CD4-positive, alpha-beta T cell (primary cell): ENCODE measurements at regions of chr2 and their contacts with region 1.

Region 1: GRCh38 chr2:174465327-174465726 is 21.5 kb downstream of the GPR155 start:
- DNase-seq: no peak
- ATAC-seq: no peak
- H3K4me3 ChIP-seq: no peak overlapping the region
- H3K4me3 Mint-ChIP-seq: no peak overlapping the region
- H3K27ac ChIP-seq: no peak overlapping the region
- H3K27ac Mint-ChIP-seq: no peak overlapping the region
- H3K4me1 ChIP-seq: no peaks in the 10 kb centered on the region
- H3K4me1 Mint-ChIP-seq: no peaks in the 10 kb centered on the region
- H3K27me3 ChIP-seq: no peaks in the 10 kb centered on the region
- H3K27me3 Mint-ChIP-seq: no peaks in the 10 kb centered on the region
- CTCF ChIP-seq: no peak

Region 2: DNA sequence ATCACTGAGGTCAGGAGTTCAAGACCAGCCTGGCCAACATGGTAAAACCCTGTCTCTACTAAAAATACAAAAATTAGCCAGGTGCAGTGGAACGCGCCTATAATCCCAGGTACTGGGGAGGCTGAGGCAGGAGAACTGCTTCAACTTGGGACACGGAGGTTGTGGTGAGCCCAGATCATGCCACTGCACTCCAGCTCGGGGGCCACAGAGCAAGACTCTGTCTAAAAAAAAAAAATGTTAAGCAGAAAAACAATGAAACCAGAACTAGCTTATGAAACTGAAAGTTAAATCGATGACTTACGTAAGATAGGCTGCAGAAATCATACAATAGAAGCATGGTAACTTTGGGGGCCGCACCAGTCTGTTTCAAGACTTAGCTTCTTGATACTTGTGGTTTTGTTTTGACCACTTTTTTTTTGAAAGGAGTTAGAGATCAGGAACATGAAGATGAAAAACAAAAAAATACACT is 27.7 kb after region 1 on chr2:
- CTCF ChIA-PET with region 1: interaction called, 7 read pairs
- POLR2A ChIA-PET with region 1: interaction called, 11 read pairs
- intact Hi-C with region 1: no loop called
- DNase-seq: peak; percentile 28 to 89 (median 56)
- ATAC-seq: peak; percentile 83
- H3K4me3 ChIP-seq: peak overlapping the region; percentile 53
- H3K4me3 Mint-ChIP-seq: peak overlapping the region; percentile 90
- H3K27ac ChIP-seq: peak overlapping the region; percentile 85
- H3K27ac Mint-ChIP-seq: peak overlapping the region; percentile 95
- H3K4me1 ChIP-seq: peaks cover 54% of the 10 kb centered on the region
- H3K4me1 Mint-ChIP-seq: peaks cover 85% of the 10 kb centered on the region
- H3K27me3 ChIP-seq: no peaks in the 10 kb centered on the region
- H3K27me3 Mint-ChIP-seq: no peaks in the 10 kb centered on the region
- CTCF ChIP-seq: no peak

Region 3: GRCh38 chr2:174546581-174547506 is 81.5 kb after region 1 on chr2:
- CTCF ChIA-PET with region 1: interaction called, 36 read pairs
- POLR2A ChIA-PET with region 1: interaction called, 3 read pairs
- intact Hi-C with region 1: loop called in 1 of 2 experiments (anchors 1 kb)
- DNase-seq: peak in 8 of 14 experiments; percentile 13 to 60 (median 24)
- ATAC-seq: peak; percentile 75
- H3K4me3 ChIP-seq: no peak overlapping the region
- H3K4me3 Mint-ChIP-seq: no peak overlapping the region
- H3K27ac ChIP-seq: no peak overlapping the region
- H3K27ac Mint-ChIP-seq: peak overlapping the region; percentile 69
- H3K4me1 ChIP-seq: peaks cover 2% of the 10 kb centered on the region
- H3K4me1 Mint-ChIP-seq: peaks cover 11% of the 10 kb centered on the region
- H3K27me3 ChIP-seq: no peaks in the 10 kb centered on the region
- H3K27me3 Mint-ChIP-seq: no peaks in the 10 kb centered on the region
- CTCF ChIP-seq: no peak

Region 4: DNA sequence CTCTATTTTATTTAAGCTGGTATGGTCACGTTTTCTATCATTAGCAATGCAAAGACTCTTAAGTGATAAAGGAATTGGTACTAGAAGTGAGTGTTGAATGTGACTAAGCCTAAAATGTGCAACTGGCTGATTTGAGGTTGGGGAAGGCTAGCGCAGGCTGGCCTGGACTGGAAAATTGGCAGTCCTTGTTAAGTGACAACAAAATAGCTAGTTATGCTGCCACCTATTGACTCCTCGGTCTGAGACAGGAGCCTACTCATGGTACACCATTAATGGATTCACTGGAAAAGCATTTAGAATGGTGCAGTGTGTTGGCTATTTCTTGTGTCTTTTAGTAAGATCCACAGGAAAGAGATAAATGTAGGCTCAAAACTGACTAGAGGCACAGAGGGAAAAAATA is 138.0 kb after region 1 on chr2:
- CTCF ChIA-PET with region 1: interaction called, 6 read pairs
- POLR2A ChIA-PET with region 1: interaction called, 8 read pairs
- intact Hi-C with region 1: loop called (anchors 2 to 10 kb)
- DNase-seq: peak in 12 of 14 experiments; percentile 19 to 85 (median 50)
- ATAC-seq: peak; percentile 66
- H3K4me3 ChIP-seq: no peak overlapping the region
- H3K4me3 Mint-ChIP-seq: peak overlapping the region; percentile 28
- H3K27ac ChIP-seq: no peak overlapping the region
- H3K27ac Mint-ChIP-seq: peak overlapping the region; percentile 95
- H3K4me1 ChIP-seq: peaks cover 69% of the 10 kb centered on the region
- H3K4me1 Mint-ChIP-seq: peaks cover 85% of the 10 kb centered on the region
- H3K27me3 ChIP-seq: no peaks in the 10 kb centered on the region
- H3K27me3 Mint-ChIP-seq: no peaks in the 10 kb centered on the region
- CTCF ChIP-seq: peak; percentile 84

Region 5: DNA sequence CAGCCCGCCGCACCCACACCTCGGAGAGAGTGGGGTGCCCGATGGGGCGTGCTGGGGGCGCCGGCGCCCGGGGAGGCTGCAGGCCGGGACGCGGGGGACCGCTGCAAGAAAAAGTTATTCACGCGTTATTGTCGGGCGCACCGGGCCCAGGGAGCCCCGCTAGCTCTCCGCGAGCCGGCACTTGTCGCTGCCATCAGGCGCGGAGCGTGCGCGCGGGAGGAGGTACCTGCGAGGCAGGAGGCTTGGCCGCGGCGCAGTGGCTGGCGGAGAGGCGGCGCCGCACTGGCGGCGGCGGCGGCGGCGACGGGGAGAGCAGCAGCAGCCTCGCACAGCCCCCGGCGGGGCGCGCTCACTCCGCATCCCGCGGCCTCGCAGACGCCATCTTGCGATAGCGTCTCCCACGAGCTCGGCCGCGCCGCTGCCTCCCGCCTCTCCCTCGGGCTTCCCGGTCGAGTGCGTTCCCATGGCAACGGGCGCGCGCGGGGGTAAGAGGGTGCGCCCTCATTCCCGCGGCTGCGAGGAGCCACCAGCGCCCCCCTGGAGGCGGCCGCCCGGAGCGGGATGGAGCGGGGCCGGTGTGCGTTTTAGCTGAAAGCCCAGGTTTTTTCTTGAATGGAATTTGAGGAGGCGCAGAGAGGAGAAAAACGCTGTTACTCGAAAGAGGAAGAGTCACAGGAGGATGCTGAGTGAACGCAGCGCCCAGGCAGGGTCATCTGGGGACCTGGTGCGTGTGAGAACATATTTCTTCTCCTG is 539.8 kb after region 1 on chr2 and contains the start of gene CHN1:
- CTCF ChIA-PET with region 1: no interaction called
- POLR2A ChIA-PET with region 1: no interaction called
- intact Hi-C with region 1: loop called in 1 of 2 experiments (anchors 10 kb)
- DNase-seq: peak; percentile 44 to 87 (median 62)
- ATAC-seq: peak; percentile 96
- H3K4me3 ChIP-seq: peak within 1 kb of the TSS; percentile 54
- H3K4me3 Mint-ChIP-seq: peak within 1 kb of the TSS; percentile 91
- H3K27ac ChIP-seq: no peak within 1 kb of the TSS
- H3K27ac Mint-ChIP-seq: no peak within 1 kb of the TSS
- H3K4me1 ChIP-seq: peaks cover 11% of the 10 kb centered on the region
- H3K4me1 Mint-ChIP-seq: peaks cover 12% of the 10 kb centered on the region
- H3K27me3 ChIP-seq: peaks cover 12 to 45% of the 10 kb centered on the region in 2 experiments
- H3K27me3 Mint-ChIP-seq: peaks cover 70% of the 10 kb centered on the region
- CTCF ChIP-seq: no peak
- total RNA-seq, gene CHN1: 5.3 to 5.6 TPM

Region 6: DNA sequence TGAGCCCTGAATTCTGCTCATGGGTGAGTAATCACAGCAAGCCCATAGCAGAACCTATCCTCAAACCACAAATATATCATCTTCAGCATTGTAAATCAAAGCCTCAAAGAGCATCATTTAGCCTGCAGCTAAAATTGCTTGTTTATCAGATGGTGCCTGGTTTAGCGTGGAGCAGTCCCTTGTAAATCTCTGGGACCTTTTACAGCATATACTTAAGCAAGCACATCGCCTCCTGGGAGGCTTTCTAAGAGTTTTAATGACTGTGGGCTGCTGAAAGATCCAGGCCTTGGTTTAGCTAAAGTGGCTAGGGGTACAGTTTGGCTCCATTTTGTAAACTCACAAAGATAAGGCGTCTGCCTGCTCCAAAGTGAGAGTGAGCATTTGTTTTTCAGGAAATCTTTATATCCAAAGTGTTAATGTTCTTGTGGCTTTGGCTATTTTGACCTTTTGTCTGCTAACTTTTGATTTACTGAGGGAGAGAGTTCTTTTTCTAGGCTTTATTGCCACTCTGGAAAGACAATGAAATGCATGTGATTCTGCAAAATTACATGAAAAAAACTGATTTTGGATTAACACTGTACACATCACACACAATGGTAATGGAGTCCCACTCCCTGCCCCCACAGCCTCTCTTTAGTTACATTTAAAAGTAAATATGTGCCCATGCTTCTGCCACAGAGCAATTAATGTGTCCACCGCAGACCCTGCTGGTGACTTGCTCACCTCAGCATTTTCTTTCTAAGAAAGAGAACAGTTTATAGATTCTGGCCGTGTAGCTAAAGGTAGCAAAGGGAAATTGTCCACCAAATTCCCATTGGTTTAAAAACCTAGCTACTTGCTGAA is 1341.9 kb after region 1 on chr2:
- CTCF ChIA-PET with region 1: no interaction called
- POLR2A ChIA-PET with region 1: no interaction called
- intact Hi-C with region 1: no loop called
- DNase-seq: no peak
- ATAC-seq: no peak
- H3K4me3 ChIP-seq: no peak overlapping the region
- H3K4me3 Mint-ChIP-seq: no peak overlapping the region
- H3K27ac ChIP-seq: no peak overlapping the region
- H3K27ac Mint-ChIP-seq: no peak overlapping the region
- H3K4me1 ChIP-seq: no peaks in the 10 kb centered on the region
- H3K4me1 Mint-ChIP-seq: no peaks in the 10 kb centered on the region
- H3K27me3 ChIP-seq: no peaks in the 10 kb centered on the region
- H3K27me3 Mint-ChIP-seq: peaks cover 36% of the 10 kb centered on the region
- CTCF ChIP-seq: no peak